ENCODE measurements at regions of chr12 and their contacts with region 1.

Region 1: GRCh38 chr12:19757317-19757877 is 318.1 kb downstream of the AEBP2 start:
- DNase-seq: no peak
- H3K4me3 ChIP-seq: no peak overlapping the region
- H3K27ac ChIP-seq: no peak overlapping the region
- H3K4me1 ChIP-seq: peaks cover 0 to 18% (median 4%) of the 10 kb centered on the region in 4 donors
- H3K27me3 ChIP-seq: no peaks in the 10 kb centered on the region
- CTCF ChIP-seq: peak; percentile 63 to 73 (median 66)
- EP300 ChIP-seq: no peak
- POLR2A ChIP-seq: no peak

Region 2: GRCh38 chr12:19683178-19683927 is 74.0 kb before region 1 on chr12:
- intact Hi-C with region 1: no loop called
- DNase-seq: no peak
- H3K4me3 ChIP-seq: no peak overlapping the region
- H3K27ac ChIP-seq: no peak overlapping the region
- H3K4me1 ChIP-seq: no peaks in the 10 kb centered on the region
- H3K27me3 ChIP-seq: no peaks in the 10 kb centered on the region
- CTCF ChIP-seq: no peak
- EP300 ChIP-seq: no peak
- POLR2A ChIP-seq: no peak

Region 3: DNA sequence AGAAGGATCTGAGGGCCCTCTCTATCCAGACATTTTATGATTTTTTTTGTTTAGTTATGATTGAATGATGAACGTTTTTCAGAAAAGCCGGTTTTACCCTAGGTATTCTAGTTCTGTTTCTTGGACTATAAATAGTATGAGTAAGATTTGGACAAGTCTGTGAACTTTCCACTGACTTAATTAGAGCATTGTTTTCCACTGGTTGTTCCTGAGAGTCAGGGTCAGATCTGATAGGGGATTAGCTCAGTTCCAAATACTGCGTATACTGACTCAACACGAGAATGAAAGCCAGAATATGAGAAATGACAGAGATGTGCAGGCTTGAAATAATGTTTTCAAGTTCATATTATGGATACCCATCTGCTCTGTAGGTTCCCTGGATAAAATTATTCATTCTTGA is 43.5 kb after region 1 on chr12:
- intact Hi-C with region 1: no loop called
- DNase-seq: no peak
- H3K4me3 ChIP-seq: no peak overlapping the region
- H3K27ac ChIP-seq: peak overlapping the region; percentile 28 to 32 (median 28)
- H3K4me1 ChIP-seq: peaks cover 0 to 17% (median 10%) of the 10 kb centered on the region in 4 donors
- H3K27me3 ChIP-seq: no peaks in the 10 kb centered on the region
- CTCF ChIP-seq: no peak
- EP300 ChIP-seq: no peak
- POLR2A ChIP-seq: no peak

Region 4: GRCh38 chr12:19847294-19848059 is 90.1 kb after region 1 on chr12:
- intact Hi-C with region 1: no loop called
- DNase-seq: no peak
- H3K4me3 ChIP-seq: peak overlapping the region in 3 of 4 donors; percentile 8 to 24 (median 22)
- H3K27ac ChIP-seq: peak overlapping the region; percentile 68 to 78 (median 74)
- H3K4me1 ChIP-seq: peaks cover under 1 to 39% (median 27%) of the 10 kb centered on the region in 4 donors
- H3K27me3 ChIP-seq: no peaks in the 10 kb centered on the region
- CTCF ChIP-seq: no peak
- EP300 ChIP-seq: peak; percentile 3
- POLR2A ChIP-seq: no peak

Region 5: GRCh38 chr12:19893514-19893913 is 136.1 kb after region 1 on chr12:
- intact Hi-C with region 1: loop called (anchors 10 kb)
- DNase-seq: no peak
- H3K4me3 ChIP-seq: no peak overlapping the region
- H3K27ac ChIP-seq: no peak overlapping the region
- H3K4me1 ChIP-seq: peaks cover 6 to 39% (median 25%) of the 10 kb centered on the region in 4 donors
- H3K27me3 ChIP-seq: no peaks in the 10 kb centered on the region
- CTCF ChIP-seq: peak in 1 of 3 experiments; percentile 20
- EP300 ChIP-seq: no peak
- POLR2A ChIP-seq: no peak

Region 6: GRCh38 chr12:20183563-20183962 is 426.2 kb after region 1 on chr12:
- intact Hi-C with region 1: no loop called
- DNase-seq: no peak
- H3K4me3 ChIP-seq: no peak overlapping the region
- H3K27ac ChIP-seq: peak overlapping the region in 1 of 4 donors; percentile 42
- H3K4me1 ChIP-seq: peaks cover 0 to 9% (median 4%) of the 10 kb centered on the region in 4 donors
- H3K27me3 ChIP-seq: no peaks in the 10 kb centered on the region
- CTCF ChIP-seq: no peak
- EP300 ChIP-seq: no peak
- POLR2A ChIP-seq: no peak